Gastrocnemius medialis (tissue), 4 donors: ENCODE measurements at regions of chr5 and their contacts with region 1.

Region 1: GRCh38 chr5:54249210-54250028 is 61.0 kb downstream of the ARL15 start:
- DNase-seq: no peak
- ATAC-seq: no peak
- H3K4me3 ChIP-seq: no peak overlapping the region
- H3K27ac ChIP-seq: no peak overlapping the region
- H3K4me1 ChIP-seq: peaks cover 3% of the 10 kb centered on the region in 2 donors
- H3K27me3 ChIP-seq: no peaks in the 10 kb centered on the region
- CTCF ChIP-seq: no peak
- POLR2A ChIP-seq: no peak

Region 2: GRCh38 chr5:54415896-54416601 is 166.6 kb after region 1 on chr5:
- in situ Hi-C with region 1: loop called in 2 of 4 experiments (anchors 10 kb)
- intact Hi-C with region 1: loop called (anchors 2 kb)
- DNase-seq: no peak
- ATAC-seq: no peak
- H3K4me3 ChIP-seq: no peak overlapping the region
- H3K27ac ChIP-seq: no peak overlapping the region
- H3K4me1 ChIP-seq: no peaks in the 10 kb centered on the region
- H3K27me3 ChIP-seq: no peaks in the 10 kb centered on the region
- CTCF ChIP-seq: no peak
- POLR2A ChIP-seq: no peak

Region 3: GRCh38 chr5:54492178-54492577 is 242.8 kb after region 1 on chr5:
- in situ Hi-C with region 1: loop called in 1 of 4 experiments (anchors 10 kb)
- intact Hi-C with region 1: loop called (anchors 5 kb)
- DNase-seq: no peak
- ATAC-seq: no peak
- H3K4me3 ChIP-seq: no peak overlapping the region
- H3K27ac ChIP-seq: no peak overlapping the region
- H3K4me1 ChIP-seq: peaks cover 0 to 4% of the 10 kb centered on the region in 2 donors
- H3K27me3 ChIP-seq: no peaks in the 10 kb centered on the region
- CTCF ChIP-seq: no peak
- POLR2A ChIP-seq: no peak

Region 4: GRCh38 chr5:54867310-54867944 is 618.0 kb after region 1 on chr5:
- in situ Hi-C with region 1: loop called in 2 of 4 experiments (anchors 25 kb)
- intact Hi-C with region 1: loop called (anchors 10 kb)
- DNase-seq: no peak
- ATAC-seq: peak; percentile 61 to 62
- H3K4me3 ChIP-seq: peak overlapping the region in 3 of 4 donors; percentile 23 to 37 (median 33)
- H3K27ac ChIP-seq: no peak overlapping the region
- H3K4me1 ChIP-seq: no peaks in the 10 kb centered on the region
- H3K27me3 ChIP-seq: no peaks in the 10 kb centered on the region
- CTCF ChIP-seq: peak; percentile 32 to 69 (median 55)
- POLR2A ChIP-seq: no peak